Activated CD4-positive, alpha-beta T cell treated with anti-CD3 and anti-CD28 coated beads for 36 hours (primary cell): ENCODE measurements at regions of chr18 and their contacts with region 1.

Region 1: GRCh38 chr18:56019908-56020307 is 431.9 kb upstream of the TCF4 start:
- DNase-seq: no peak
- ATAC-seq: no peak
- H3K4me3 Mint-ChIP-seq: no peak overlapping the region
- H3K27ac Mint-ChIP-seq: no peak overlapping the region
- H3K4me1 Mint-ChIP-seq: no peaks in the 10 kb centered on the region
- H3K27me3 Mint-ChIP-seq: no peaks in the 10 kb centered on the region

Region 2: GRCh38 chr18:55546851-55547704 is 472.8 kb before region 1 on chr18:
- CTCF ChIA-PET with region 1: no interaction called
- POLR2A ChIA-PET with region 1: no interaction called
- intact Hi-C with region 1: no loop called
- DNase-seq: no peak
- ATAC-seq: no peak
- H3K4me3 Mint-ChIP-seq: no peak overlapping the region
- H3K27ac Mint-ChIP-seq: no peak overlapping the region
- H3K4me1 Mint-ChIP-seq: no peaks in the 10 kb centered on the region
- H3K27me3 Mint-ChIP-seq: no peaks in the 10 kb centered on the region

Region 3: DNA sequence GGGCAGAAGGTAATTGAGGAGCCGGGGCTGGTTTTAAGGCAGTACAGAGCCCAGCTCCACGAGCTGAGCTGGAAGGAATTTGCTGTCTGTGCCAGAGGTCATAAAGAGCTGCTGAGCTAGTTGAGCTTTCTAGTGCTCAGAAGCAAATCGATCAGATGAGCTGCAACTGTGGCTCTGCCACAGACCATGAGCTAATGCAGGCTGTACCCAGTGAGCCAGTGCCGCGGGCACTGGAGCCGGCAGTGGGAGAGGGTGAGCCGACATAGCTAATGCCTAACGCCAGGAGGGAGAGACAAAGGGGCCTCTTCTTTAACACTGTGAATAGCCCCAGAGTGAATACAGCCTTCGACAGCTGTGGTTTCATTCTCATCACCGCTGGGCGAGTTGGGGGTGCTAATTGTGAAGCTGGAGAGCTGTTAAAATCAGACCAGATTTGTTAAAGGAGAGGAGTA is 21.8 kb before region 1 on chr18:
- CTCF ChIA-PET with region 1: no interaction called
- POLR2A ChIA-PET with region 1: no interaction called
- intact Hi-C with region 1: loop called in 1 of 2 experiments (anchors 2 kb)
- DNase-seq: no peak
- ATAC-seq: no peak
- H3K4me3 Mint-ChIP-seq: no peak overlapping the region
- H3K27ac Mint-ChIP-seq: no peak overlapping the region
- H3K4me1 Mint-ChIP-seq: peaks cover 4% of the 10 kb centered on the region
- H3K27me3 Mint-ChIP-seq: peaks cover 3% of the 10 kb centered on the region

Region 4: DNA sequence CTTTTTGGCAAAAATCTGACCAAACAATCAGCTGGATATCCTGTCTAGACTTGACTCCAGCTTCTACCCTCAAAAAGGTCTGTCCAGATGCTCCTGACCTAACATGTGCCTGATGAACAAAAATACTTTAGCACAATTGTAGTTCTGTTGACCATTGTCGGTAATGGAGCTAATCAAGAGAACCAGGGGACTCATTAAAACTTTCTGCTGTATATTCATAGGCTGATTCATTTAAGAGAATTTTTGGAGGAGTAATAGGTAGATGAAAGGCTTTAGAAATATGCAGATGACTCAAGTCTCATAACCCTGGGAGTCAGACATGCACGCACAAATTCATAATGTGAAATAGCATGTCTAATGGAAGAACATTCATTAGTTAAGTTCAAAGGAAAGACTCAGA is 104.3 kb after region 1 on chr18:
- CTCF ChIA-PET with region 1: no interaction called
- POLR2A ChIA-PET with region 1: no interaction called
- intact Hi-C with region 1: no loop called
- DNase-seq: no peak
- ATAC-seq: no peak
- H3K4me3 Mint-ChIP-seq: no peak overlapping the region
- H3K27ac Mint-ChIP-seq: no peak overlapping the region
- H3K4me1 Mint-ChIP-seq: no peaks in the 10 kb centered on the region
- H3K27me3 Mint-ChIP-seq: peaks cover 2% of the 10 kb centered on the region